PC-9 (cell line): ENCODE measurements at regions of chr3 and their contacts with region 1.

Region 1: GRCh38 chr3:46163318-46164041 is 44.6 kb downstream of the CCR1 start:
- DNase-seq: peak; percentile 88 to 94
- H3K4me3 ChIP-seq: peak overlapping the region; percentile 54
- H3K27ac ChIP-seq: peak overlapping the region; percentile 93
- H3K4me1 ChIP-seq: peaks cover 35% of the 10 kb centered on the region
- H3K27me3 ChIP-seq: no peaks in the 10 kb centered on the region
- CTCF ChIP-seq: 0 out of 2 replicates have a peak, but pooled peaks have one; percentile 15

Region 2: GRCh38 chr3:45665101-45665572 is 498.3 kb before region 1 on chr3:
- CTCF ChIA-PET with region 1: no interaction called
- POLR2A ChIA-PET with region 1: interaction called, 10 read pairs
- intact Hi-C with region 1: no loop called
- DNase-seq: peak in 1 of 2 experiments; percentile 46
- H3K4me3 ChIP-seq: no peak overlapping the region
- H3K27ac ChIP-seq: no peak overlapping the region
- H3K4me1 ChIP-seq: peaks cover 14% of the 10 kb centered on the region; the same call in 1 of the 2 replicates
- H3K27me3 ChIP-seq: no peaks in the 10 kb centered on the region
- CTCF ChIP-seq: peak; percentile 56

Region 3: GRCh38 chr3:46110701-46111493 is 52.6 kb before region 1 on chr3:
- CTCF ChIA-PET with region 1: no interaction called
- POLR2A ChIA-PET with region 1: no interaction called
- intact Hi-C with region 1: loop called (anchors 1 kb)
- DNase-seq: peak; percentile 72 to 98
- H3K4me3 ChIP-seq: peak overlapping the region; percentile 41; the same call in 1 of the 2 replicates
- H3K27ac ChIP-seq: peak overlapping the region; percentile 98
- H3K4me1 ChIP-seq: peaks cover 76% of the 10 kb centered on the region
- H3K27me3 ChIP-seq: no peaks in the 10 kb centered on the region
- CTCF ChIP-seq: no peak

Region 4: GRCh38 chr3:46127501-46127900 is 36.0 kb before region 1 on chr3:
- CTCF ChIA-PET with region 1: no interaction called
- POLR2A ChIA-PET with region 1: interaction called, 3 read pairs
- intact Hi-C with region 1: loop called (anchors 1 kb)
- DNase-seq: peak; percentile 57 to 88
- H3K4me3 ChIP-seq: no peak overlapping the region
- H3K27ac ChIP-seq: peak overlapping the region; percentile 62
- H3K4me1 ChIP-seq: peaks cover 62% of the 10 kb centered on the region
- H3K27me3 ChIP-seq: no peaks in the 10 kb centered on the region
- CTCF ChIP-seq: no peak

Region 5: GRCh38 chr3:46208167-46208704 is 44.8 kb after region 1 on chr3 and contains the start of gene CCR1:
- CTCF ChIA-PET with region 1: interaction called, 7 read pairs
- POLR2A ChIA-PET with region 1: no interaction called
- intact Hi-C with region 1: loop called (anchors 2 kb)
- DNase-seq: peak; percentile 52 to 68
- H3K4me3 ChIP-seq: no peak within 1 kb of the TSS
- H3K27ac ChIP-seq: peak within 1 kb of the TSS; percentile 27; the same call in 1 of the 2 replicates
- H3K4me1 ChIP-seq: peaks cover 14% of the 10 kb centered on the region
- H3K27me3 ChIP-seq: no peaks in the 10 kb centered on the region
- CTCF ChIP-seq: peak; percentile 77
- total RNA-seq, gene CCR1: 0.28 TPM in 1 of 2 replicates, not detected in the other

Region 6: GRCh38 chr3:46359733-46360493 is 196.4 kb after region 1 on chr3:
- CTCF ChIA-PET with region 1: no interaction called
- POLR2A ChIA-PET with region 1: no interaction called
- intact Hi-C with region 1: loop called (anchors 1 kb)
- DNase-seq: no peak
- H3K4me3 ChIP-seq: no peak overlapping the region
- H3K27ac ChIP-seq: no peak overlapping the region
- H3K4me1 ChIP-seq: peaks cover 8% of the 10 kb centered on the region
- H3K27me3 ChIP-seq: no peaks in the 10 kb centered on the region
- CTCF ChIP-seq: no peak

Region 7: DNA sequence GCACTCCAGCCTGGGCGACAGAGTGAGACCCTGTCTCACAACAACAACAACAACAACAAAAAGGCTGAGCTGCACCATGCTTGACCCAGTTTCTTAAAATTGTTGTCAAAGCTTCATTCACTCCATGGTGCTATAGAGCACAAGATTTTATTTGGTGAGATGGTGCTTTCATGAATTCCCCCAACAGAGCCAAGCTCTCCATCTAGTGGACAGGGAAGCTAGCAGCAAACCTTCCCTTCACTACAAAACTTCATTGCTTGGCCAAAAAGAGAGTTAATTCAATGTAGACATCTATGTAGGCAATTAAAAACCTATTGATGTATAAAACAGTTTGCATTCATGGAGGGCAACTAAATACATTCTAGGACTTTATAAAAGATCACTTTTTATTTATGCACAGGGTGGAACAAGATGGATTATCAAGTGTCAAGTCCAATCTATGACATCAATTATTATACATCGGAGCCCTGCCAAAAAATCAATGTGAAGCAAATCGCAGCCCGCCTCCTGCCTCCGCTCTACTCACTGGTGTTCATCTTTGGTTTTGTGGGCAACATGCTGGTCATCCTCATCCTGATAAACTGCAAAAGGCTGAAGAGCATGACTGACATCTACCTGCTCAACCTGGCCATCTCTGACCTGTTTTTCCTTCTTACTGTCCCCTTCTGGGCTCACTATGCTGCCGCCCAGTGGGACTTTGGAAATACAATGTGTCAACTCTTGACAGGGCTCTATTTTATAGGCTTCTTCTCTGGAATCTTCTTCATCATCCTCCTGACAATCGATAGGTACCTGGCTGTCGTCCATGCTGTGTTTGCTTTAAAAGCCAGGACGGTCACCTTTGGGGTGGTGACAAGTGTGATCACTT is 209.2 kb after region 1 on chr3:
- CTCF ChIA-PET with region 1: interaction called, 3 read pairs
- POLR2A ChIA-PET with region 1: no interaction called
- intact Hi-C with region 1: loop called (anchors 1 kb)
- DNase-seq: no peak
- H3K4me3 ChIP-seq: no peak overlapping the region
- H3K27ac ChIP-seq: no peak overlapping the region
- H3K4me1 ChIP-seq: peaks cover 19% of the 10 kb centered on the region
- H3K27me3 ChIP-seq: no peaks in the 10 kb centered on the region
- CTCF ChIP-seq: peak; percentile 76

Region 8: DNA sequence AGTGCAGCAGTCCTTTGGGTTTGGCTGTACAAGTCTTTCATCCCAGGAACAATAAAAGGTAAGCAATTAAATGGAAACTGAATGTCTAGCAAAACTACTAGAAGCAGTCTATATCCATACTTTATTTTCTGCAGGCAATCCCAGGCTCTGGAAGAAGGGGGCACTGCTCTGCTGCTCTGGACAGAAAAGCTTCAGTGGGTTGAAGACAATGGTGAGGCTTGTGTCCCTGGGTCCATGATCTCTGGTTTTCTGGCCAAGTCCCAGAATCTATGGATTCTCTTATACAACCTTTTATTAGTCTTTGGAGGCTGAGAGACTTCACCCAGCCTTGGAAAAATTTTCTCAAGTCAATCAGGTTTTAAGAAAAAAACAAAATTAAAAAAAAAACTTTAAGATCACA is 1276.7 kb after region 1 on chr3:
- CTCF ChIA-PET with region 1: no interaction called
- POLR2A ChIA-PET with region 1: no interaction called
- intact Hi-C with region 1: no loop called
- DNase-seq: no peak
- H3K4me3 ChIP-seq: no peak overlapping the region
- H3K27ac ChIP-seq: no peak overlapping the region
- H3K4me1 ChIP-seq: no peaks in the 10 kb centered on the region
- H3K27me3 ChIP-seq: no peaks in the 10 kb centered on the region
- CTCF ChIP-seq: no peak